ENCODE measurements at regions of chr18 and their contacts with region 1.

Region 1: GRCh38 chr18:44758861-44759631 is 78.4 kb downstream of the SETBP1 start:
- DNase-seq: peak; percentile 37
- H3K4me3 Mint-ChIP-seq: peak overlapping the region; percentile 71
- H3K27ac Mint-ChIP-seq: peak overlapping the region; percentile 98
- H3K4me1 Mint-ChIP-seq: peaks cover 26% of the 10 kb centered on the region
- H3K27me3 Mint-ChIP-seq: peaks cover 2% of the 10 kb centered on the region

Region 2: DNA sequence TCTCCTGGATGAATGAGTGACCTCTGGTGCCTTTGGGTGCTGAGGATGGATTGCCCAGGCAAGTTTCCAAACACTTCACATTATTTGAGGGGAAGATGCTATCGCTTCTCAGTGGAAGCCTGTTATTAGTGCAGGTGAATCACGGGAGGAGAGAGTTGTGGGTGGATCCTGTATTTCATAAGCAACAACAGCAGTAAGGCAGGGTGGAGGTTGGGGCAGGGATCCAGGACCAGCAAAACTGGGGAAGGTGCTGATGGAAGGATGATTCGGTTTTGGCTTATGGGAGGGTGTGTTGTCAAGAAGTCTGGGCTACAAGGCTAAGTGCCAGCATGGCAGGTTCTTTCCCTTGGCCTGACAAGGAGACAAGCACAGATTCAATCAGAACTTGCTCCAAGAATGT is 116.0 kb before region 1 on chr18:
- CTCF ChIA-PET with region 1: no interaction called
- POLR2A ChIA-PET with region 1: no interaction called
- DNase-seq: no peak
- H3K4me3 Mint-ChIP-seq: no peak overlapping the region
- H3K27ac Mint-ChIP-seq: no peak overlapping the region
- H3K4me1 Mint-ChIP-seq: peaks cover 3% of the 10 kb centered on the region
- H3K27me3 Mint-ChIP-seq: peaks cover 39% of the 10 kb centered on the region

Region 3: DNA sequence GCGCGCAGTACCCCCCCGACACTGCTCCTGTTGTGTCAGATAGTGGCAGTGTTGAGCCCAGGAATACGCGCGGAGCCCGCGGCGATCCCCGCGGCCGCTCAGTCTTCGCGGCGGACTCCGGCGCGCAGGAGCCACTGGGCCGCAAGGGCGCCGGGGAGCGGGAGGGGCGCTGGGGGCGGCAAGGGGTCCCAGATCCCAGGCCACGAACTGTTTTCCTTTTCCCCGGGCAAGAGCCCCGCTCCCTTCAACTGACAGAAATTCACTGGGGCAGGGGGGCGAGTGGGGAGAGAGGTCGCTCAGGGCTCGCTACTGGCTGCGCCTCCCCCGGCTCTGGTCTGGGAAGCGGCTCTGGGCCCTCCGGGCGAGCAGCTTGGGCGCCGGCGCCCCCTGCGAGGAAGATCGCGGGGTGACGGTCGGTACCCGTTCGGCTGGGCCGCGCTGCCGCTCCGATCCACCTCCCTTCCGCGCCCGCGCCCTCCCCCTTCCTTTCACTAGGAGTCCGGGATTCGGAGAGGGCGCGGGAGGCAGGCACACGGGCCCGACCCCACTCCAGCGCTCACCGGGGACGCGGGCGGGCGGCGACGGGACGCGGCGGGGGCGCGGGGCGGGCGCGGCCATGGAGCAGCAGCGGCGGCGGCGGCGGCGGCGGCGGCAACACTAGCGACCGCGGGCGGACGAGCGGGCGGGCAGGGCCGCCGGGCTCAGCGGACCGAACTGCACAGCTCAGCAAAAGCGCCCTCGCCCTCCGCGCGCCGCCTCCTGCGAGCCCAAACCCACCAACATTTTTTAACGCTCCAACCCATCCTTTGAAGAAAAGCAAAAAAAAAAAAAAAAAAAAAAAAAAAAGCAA is 79.8 kb before region 1 on chr18:
- CTCF ChIA-PET with region 1: interaction called, 10 read pairs
- POLR2A ChIA-PET with region 1: interaction called, 20 read pairs
- DNase-seq: peak; percentile 85
- H3K4me3 Mint-ChIP-seq: no peak overlapping the region
- H3K27ac Mint-ChIP-seq: no peak overlapping the region
- H3K4me1 Mint-ChIP-seq: peaks cover 17% of the 10 kb centered on the region
- H3K27me3 Mint-ChIP-seq: peaks cover 37% of the 10 kb centered on the region

Region 4: GRCh38 chr18:44733069-44733753 is 25.8 kb before region 1 on chr18:
- CTCF ChIA-PET with region 1: interaction called, 3 read pairs
- POLR2A ChIA-PET with region 1: interaction called, 11 read pairs
- DNase-seq: peak; percentile 59
- H3K4me3 Mint-ChIP-seq: no peak overlapping the region
- H3K27ac Mint-ChIP-seq: peak overlapping the region; percentile 8
- H3K4me1 Mint-ChIP-seq: peaks cover 70% of the 10 kb centered on the region
- H3K27me3 Mint-ChIP-seq: peaks cover 27% of the 10 kb centered on the region

Region 5: GRCh38 chr18:44786688-44787087 is 27.6 kb after region 1 on chr18:
- CTCF ChIA-PET with region 1: no interaction called
- POLR2A ChIA-PET with region 1: no interaction called
- DNase-seq: no peak
- H3K4me3 Mint-ChIP-seq: peak overlapping the region; percentile 56
- H3K27ac Mint-ChIP-seq: no peak overlapping the region
- H3K4me1 Mint-ChIP-seq: peaks cover 18% of the 10 kb centered on the region
- H3K27me3 Mint-ChIP-seq: peaks cover 11% of the 10 kb centered on the region